Activated CD8-positive, alpha-beta T cell treated with anti-CD3 and anti-CD28 coated beads for 36 hours (primary cell): ENCODE measurements at regions of chr16 and their contacts with region 1.

Region 1: GRCh38 chr16:31179747-31180459 is at the start of gene FUS:
- DNase-seq: peak; percentile 92
- ATAC-seq: peak; percentile 55
- H3K4me3 Mint-ChIP-seq: peak within 1 kb of the TSS; percentile 99
- H3K27ac Mint-ChIP-seq: peak within 1 kb of the TSS; percentile 99
- H3K4me1 Mint-ChIP-seq: peaks cover 44% of the 10 kb centered on the region
- H3K27me3 Mint-ChIP-seq: no peaks in the 10 kb centered on the region
- CTCF ChIP-seq: no peak
- total RNA-seq, gene FUS: 486 to 533 TPM

Region 2: DNA sequence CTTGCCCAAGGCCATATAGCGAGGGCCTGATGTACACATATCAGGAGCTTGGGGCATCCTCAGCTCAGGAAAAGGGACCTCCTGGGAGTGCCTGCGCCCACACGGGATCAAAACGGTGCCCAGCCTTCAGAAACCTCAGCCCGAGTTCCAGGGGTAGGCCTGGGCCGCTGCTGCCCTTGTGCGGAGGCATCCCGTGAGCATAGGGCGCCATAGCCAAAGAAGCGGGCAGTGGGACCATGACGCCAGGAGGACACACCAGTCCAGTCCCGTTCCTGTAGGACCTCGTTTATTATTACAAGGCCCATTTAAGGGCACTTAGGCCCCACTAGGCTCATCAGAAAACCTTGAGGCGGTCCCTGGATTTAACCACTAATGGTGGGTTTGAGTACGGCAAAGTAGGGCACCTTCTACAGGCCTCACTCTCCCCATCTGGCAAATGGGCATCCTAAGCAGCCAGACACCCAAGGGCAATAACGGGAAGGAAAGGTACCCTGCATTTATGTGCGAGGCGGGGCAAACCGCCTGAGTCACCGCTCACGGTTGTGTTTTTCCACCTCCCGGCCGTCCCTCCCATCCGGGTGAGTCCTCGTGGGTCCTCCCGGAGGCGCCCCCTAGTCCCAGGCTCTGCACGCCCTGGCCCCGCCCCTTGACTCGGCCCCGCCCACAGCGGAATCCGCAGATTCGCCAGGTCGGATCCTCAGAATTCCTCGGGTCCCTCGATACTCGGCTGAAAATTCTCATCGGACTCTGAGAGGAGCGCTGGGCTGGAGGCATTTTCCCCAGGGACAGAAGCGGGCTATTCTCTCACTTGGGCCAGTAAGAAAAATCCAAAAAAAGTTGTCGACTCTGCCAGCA is 223.1 kb before region 1 on chr16:
- CTCF ChIA-PET with region 1: no interaction called
- POLR2A ChIA-PET with region 1: interaction called, 10 read pairs
- intact Hi-C with region 1: no loop called
- DNase-seq: peak; percentile 95
- ATAC-seq: peak; percentile 83
- H3K4me3 Mint-ChIP-seq: peak overlapping the region; percentile 89
- H3K27ac Mint-ChIP-seq: peak overlapping the region; percentile 99
- H3K4me1 Mint-ChIP-seq: peaks cover 37% of the 10 kb centered on the region
- H3K27me3 Mint-ChIP-seq: no peaks in the 10 kb centered on the region
- CTCF ChIP-seq: no peak

Region 3: DNA sequence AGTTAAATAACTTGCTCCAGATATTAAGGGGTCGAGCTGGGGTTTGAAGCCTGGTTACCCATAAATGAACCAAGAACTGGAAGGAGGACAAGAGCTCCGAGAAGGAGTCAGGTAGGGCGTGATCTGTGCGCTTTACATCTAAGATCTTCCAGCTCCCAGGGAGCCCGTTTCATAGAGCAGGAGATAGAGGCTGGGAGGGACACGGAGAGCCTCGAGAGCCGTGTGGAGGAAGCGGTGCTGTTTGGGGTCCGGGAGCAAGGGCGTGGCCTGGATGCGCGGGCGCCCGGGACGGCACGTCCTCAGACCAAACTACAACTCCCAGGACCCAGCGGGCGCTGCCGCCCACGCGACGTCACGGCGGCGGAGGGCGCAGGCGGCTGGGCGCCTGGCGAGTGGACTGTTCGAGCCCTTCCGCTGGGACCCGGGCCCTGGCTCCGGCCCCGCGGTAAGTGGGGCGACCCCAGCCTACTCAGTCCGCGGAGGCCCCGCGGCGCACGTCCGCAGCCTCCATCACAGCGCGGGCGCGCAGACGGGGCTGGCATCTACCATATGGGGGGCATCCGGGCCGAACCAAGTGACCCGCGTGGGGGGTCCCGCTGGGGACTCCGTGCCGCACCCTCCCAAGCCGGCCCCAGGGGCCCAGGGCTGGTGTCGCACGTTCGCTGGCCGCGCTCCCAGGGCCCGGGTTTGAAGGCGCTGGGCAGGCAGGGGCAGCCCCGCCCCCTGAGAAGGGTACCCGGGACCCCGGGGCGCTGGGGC is 71.7 kb before region 1 on chr16 and contains the start of gene BCKDK:
- CTCF ChIA-PET with region 1: no interaction called
- POLR2A ChIA-PET with region 1: interaction called, 15 read pairs
- intact Hi-C with region 1: loop called (anchors 10 kb)
- DNase-seq: peak; percentile 89
- ATAC-seq: peak; percentile 77
- H3K4me3 Mint-ChIP-seq: peak within 1 kb of the TSS; percentile 81
- H3K27ac Mint-ChIP-seq: peak within 1 kb of the TSS; percentile 90
- H3K4me1 Mint-ChIP-seq: peaks cover 34% of the 10 kb centered on the region
- H3K27me3 Mint-ChIP-seq: no peaks in the 10 kb centered on the region
- CTCF ChIP-seq: no peak
- total RNA-seq, gene BCKDK: 55.1 to 58.7 TPM

Region 4: DNA sequence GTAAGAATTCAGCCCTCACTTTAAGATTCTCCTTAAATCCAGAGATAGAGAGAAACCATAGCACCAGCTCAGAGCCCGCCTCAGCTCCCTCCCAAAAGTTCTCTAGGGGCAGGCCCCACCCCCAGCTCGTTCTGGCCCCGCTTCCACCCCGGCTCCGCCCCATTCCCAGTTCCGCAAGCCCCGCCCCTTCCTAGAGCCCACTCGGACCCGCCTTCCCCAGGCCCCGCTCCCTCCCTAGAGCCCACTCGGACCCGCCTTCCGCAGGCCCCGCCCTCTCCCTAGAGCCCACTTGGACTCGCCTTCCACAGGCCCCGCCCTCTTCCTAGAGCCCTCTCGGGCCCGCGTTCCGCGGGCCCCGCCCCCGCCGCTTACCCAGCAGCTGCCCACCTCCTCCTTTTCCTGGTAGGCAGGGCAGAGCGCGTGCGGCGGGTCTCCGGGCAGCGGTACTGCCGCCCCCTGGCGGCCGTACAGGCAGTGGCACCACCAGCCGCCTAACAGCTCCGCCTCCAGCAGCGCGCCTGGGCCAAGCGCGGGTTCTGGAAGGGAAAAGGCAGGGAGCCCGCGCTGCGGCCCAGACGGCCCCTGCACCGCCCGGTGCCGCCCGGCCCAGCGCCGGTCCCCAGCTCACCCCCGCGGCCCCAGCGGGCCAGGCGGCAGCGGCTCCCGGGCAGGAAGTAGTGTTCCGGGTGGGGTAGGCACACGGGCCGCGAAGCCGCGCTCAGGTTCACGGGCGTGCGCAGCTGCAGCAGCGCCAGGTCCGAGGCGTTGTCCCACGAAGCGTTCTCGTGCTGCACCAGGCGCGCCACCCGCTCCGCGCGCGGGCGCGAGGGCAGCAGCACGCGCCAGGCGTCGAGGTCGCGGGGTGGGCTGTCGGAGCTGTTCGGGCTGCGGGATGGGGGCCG is 37.5 kb before region 1 on chr16:
- CTCF ChIA-PET with region 1: interaction called, 13 read pairs
- POLR2A ChIA-PET with region 1: interaction called, 59 read pairs
- intact Hi-C with region 1: no loop called
- DNase-seq: peak; percentile 99
- ATAC-seq: peak; percentile 99
- H3K4me3 Mint-ChIP-seq: peak overlapping the region; percentile 67
- H3K27ac Mint-ChIP-seq: peak overlapping the region; percentile 87
- H3K4me1 Mint-ChIP-seq: peaks cover 7% of the 10 kb centered on the region
- H3K27me3 Mint-ChIP-seq: no peaks in the 10 kb centered on the region
- CTCF ChIP-seq: peak; percentile 72

Region 5: GRCh38 chr16:31167315-31167714 is 12.6 kb before region 1 on chr16:
- CTCF ChIA-PET with region 1: interaction called, 4 read pairs
- POLR2A ChIA-PET with region 1: interaction called, 11 read pairs
- intact Hi-C with region 1: no loop called
- DNase-seq: no peak
- ATAC-seq: no peak
- H3K4me3 Mint-ChIP-seq: no peak overlapping the region
- H3K27ac Mint-ChIP-seq: no peak overlapping the region
- H3K4me1 Mint-ChIP-seq: no peaks in the 10 kb centered on the region
- H3K27me3 Mint-ChIP-seq: no peaks in the 10 kb centered on the region
- CTCF ChIP-seq: no peak

Region 6: GRCh38 chr16:31458844-31459721 is 279.2 kb after region 1 on chr16 and contains the start of gene ARMC5:
- CTCF ChIA-PET with region 1: interaction called, 4 read pairs
- POLR2A ChIA-PET with region 1: interaction called, 26 read pairs
- intact Hi-C with region 1: no loop called
- DNase-seq: peak; percentile 98
- ATAC-seq: peak; percentile 77
- H3K4me3 Mint-ChIP-seq: peak within 1 kb of the TSS; percentile 91
- H3K27ac Mint-ChIP-seq: peak within 1 kb of the TSS; percentile 97
- H3K4me1 Mint-ChIP-seq: peaks cover 39% of the 10 kb centered on the region
- H3K27me3 Mint-ChIP-seq: no peaks in the 10 kb centered on the region
- CTCF ChIP-seq: peak; percentile 73
- total RNA-seq, gene ARMC5: 8.2 to 10.0 TPM